ENCODE measurements at regions of chr4 and their contacts with region 1.

Region 1: DNA sequence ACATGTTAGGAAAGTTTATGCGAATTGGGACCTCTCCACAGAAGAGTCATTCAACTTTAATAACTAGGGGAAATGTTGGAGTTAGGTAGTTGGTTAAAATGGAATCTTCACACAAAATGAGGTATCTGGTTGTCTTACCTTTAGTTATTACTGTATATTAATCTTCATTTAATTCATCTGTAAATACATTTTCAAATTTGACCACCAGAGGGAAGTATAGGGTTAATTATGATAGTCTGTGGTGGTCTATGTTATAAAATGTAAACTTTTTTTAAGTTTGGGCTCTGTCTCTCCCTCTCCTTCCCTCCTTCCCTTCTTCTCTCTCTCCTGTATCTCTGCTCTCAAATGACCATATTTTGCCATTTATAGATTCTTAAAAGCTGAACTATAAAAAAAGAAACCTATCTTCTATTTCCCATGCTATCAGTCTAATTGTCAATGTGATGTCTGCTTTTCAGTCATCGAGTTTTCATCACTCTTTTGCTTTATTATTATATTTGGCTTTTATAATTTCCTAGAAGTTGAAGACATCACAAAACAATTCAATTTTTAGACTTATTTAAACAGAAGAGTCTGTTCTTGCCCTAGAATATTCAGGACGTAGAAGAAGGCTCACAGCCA is 49.8 kb downstream of the TMEM144 start:
- DNase-seq: peak; percentile 56
- H3K4me3 Mint-ChIP-seq: no peak overlapping the region
- H3K27ac Mint-ChIP-seq: peak overlapping the region; percentile 40
- H3K4me1 Mint-ChIP-seq: peaks cover 6% of the 10 kb centered on the region
- H3K27me3 Mint-ChIP-seq: no peaks in the 10 kb centered on the region
- CTCF ChIP-seq: peak; percentile 59

Region 2: DNA sequence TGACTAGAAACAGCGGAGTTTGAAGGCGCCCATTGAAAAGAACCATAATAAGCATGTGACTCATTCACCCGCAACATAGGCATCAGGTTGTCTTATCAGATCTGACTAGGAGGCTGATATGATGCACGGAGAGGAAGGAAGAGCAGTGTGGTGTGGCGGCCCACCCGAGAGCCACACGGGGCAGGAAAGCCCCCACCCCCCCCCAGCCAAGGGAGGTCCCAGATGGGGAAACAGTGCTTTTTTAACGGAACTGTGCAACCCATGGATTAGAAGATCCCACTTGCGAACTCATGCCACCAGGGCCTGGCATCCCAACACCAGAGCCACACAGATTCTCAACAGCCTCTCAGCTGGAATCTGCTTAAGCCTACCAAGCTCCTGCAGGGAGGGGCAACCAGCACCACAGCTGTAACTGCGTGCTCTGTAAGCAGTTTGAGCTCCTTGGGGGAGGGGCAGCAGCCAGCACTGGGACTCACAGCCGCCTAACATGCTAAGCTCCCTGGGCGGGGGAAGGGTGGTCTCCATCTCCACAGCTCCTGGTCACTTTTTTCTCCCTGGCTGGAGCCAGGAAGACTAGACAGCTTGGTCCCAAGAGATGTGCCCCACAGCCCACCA is 1754.6 kb before region 1 on chr4:
- CTCF ChIA-PET with region 1: no interaction called
- POLR2A ChIA-PET with region 1: no interaction called
- intact Hi-C with region 1: no loop called
- DNase-seq: no peak
- H3K4me3 Mint-ChIP-seq: no peak overlapping the region
- H3K27ac Mint-ChIP-seq: no peak overlapping the region
- H3K4me1 Mint-ChIP-seq: no peaks in the 10 kb centered on the region
- H3K27me3 Mint-ChIP-seq: no peaks in the 10 kb centered on the region
- CTCF ChIP-seq: no peak

Region 3: GRCh38 chr4:158033416-158034120 is 226.5 kb before region 1 on chr4:
- CTCF ChIA-PET with region 1: no interaction called
- POLR2A ChIA-PET with region 1: no interaction called
- intact Hi-C with region 1: no loop called
- DNase-seq: peak; percentile 21
- H3K4me3 Mint-ChIP-seq: no peak overlapping the region
- H3K27ac Mint-ChIP-seq: no peak overlapping the region
- H3K4me1 Mint-ChIP-seq: peaks cover 8% of the 10 kb centered on the region
- H3K27me3 Mint-ChIP-seq: no peaks in the 10 kb centered on the region
- CTCF ChIP-seq: no peak

Region 4: GRCh38 chr4:158314756-158315487 is 54.9 kb after region 1 on chr4:
- CTCF ChIA-PET with region 1: interaction called, 4 read pairs
- POLR2A ChIA-PET with region 1: no interaction called
- intact Hi-C with region 1: loop called (anchors 2 kb)
- DNase-seq: peak; percentile 90
- H3K4me3 Mint-ChIP-seq: peak overlapping the region; percentile 74
- H3K27ac Mint-ChIP-seq: peak overlapping the region; percentile 100
- H3K4me1 Mint-ChIP-seq: peaks cover 49% of the 10 kb centered on the region
- H3K27me3 Mint-ChIP-seq: no peaks in the 10 kb centered on the region
- CTCF ChIP-seq: no peak

Region 5: GRCh38 chr4:158395889-158396288 is 135.8 kb after region 1 on chr4:
- CTCF ChIA-PET with region 1: interaction called, 3 read pairs
- POLR2A ChIA-PET with region 1: interaction called, 3 read pairs
- intact Hi-C with region 1: loop called (anchors 10 kb)
- DNase-seq: no peak
- H3K4me3 Mint-ChIP-seq: no peak overlapping the region
- H3K27ac Mint-ChIP-seq: no peak overlapping the region
- H3K4me1 Mint-ChIP-seq: peaks cover 4% of the 10 kb centered on the region
- H3K27me3 Mint-ChIP-seq: no peaks in the 10 kb centered on the region
- CTCF ChIP-seq: no peak

Region 6: DNA sequence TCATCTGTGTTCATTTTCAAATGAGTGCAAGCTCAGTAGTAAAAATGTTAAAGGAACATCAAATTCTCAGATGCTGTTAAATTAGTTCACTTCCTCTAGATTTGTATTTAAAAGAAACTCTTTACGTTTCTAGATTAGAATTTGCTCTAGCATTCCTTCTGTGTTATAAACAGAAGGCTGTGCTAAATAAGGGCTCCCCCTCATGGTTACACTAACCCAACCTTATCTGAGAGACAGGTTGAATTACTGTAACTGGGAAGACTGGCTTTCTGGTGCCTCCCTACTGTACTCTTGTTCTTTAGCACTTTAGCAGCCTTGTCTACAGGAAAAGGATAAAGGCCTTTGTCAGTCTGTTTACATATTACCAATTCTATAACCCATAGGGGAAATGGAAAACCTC is 318.4 kb after region 1 on chr4:
- CTCF ChIA-PET with region 1: interaction called, 8 read pairs
- POLR2A ChIA-PET with region 1: no interaction called
- intact Hi-C with region 1: loop called (anchors 1 kb)
- DNase-seq: peak; percentile 55
- H3K4me3 Mint-ChIP-seq: no peak overlapping the region
- H3K27ac Mint-ChIP-seq: peak overlapping the region; percentile 63
- H3K4me1 Mint-ChIP-seq: peaks cover 9% of the 10 kb centered on the region
- H3K27me3 Mint-ChIP-seq: no peaks in the 10 kb centered on the region
- CTCF ChIP-seq: peak; percentile 48

Region 7: DNA sequence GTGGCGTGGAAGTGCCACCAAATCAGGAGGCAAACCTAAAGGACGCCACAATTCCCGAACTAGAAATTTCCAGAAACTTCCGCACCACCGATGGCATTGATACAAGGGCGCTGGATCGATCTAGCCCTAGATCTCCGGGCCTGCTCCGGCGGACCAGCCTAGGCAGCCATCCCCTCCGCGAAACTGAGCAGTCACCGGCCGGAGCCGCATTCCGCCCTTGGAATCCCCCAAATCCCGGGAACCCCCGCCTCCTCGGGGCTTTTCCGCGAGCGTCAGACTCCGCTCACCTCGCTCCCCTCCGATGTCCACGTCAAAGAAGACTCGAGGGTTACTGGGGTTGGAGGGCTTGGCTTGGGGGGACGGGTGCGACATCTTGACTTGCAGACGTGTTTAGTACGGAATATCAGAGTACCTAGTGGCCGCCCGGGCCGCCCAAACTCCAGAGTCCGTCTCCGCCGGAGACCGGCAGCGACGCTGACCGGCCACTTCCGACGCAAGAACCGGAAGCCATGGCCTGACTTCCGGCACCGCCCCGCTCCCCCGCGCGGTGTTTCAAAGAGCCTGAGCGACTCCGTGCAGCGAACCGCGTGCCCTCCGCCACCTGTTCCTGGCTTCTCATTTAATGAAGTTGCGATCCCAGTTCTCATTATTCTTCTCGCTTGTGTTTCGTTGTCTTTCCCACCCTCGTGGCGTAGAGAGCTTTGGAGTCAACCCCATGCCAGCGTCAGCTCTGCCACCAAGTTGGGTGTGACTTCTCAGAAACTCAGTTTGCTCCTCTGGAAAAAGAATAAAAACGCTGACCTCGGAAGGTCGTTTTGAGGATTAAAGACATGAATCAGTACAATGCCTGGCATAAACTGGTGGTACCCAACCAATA is 463.1 kb after region 1 on chr4 and contains the start of gene PPID:
- CTCF ChIA-PET with region 1: no interaction called
- POLR2A ChIA-PET with region 1: no interaction called
- intact Hi-C with region 1: loop called (anchors 1 kb)
- DNase-seq: peak; percentile 82
- H3K4me3 Mint-ChIP-seq: peak within 1 kb of the TSS; percentile 100
- H3K27ac Mint-ChIP-seq: peak within 1 kb of the TSS; percentile 97
- H3K4me1 Mint-ChIP-seq: peaks cover 7% of the 10 kb centered on the region
- H3K27me3 Mint-ChIP-seq: peaks cover 17% of the 10 kb centered on the region
- CTCF ChIP-seq: no peak
- total RNA-seq, gene PPID: 29.2 and 36.6 TPM in 2 replicates

Region 8: GRCh38 chr4:159206427-159206871 is 946.4 kb after region 1 on chr4:
- CTCF ChIA-PET with region 1: no interaction called
- POLR2A ChIA-PET with region 1: no interaction called
- intact Hi-C with region 1: loop called (anchors 2 kb)
- DNase-seq: no peak
- H3K4me3 Mint-ChIP-seq: no peak overlapping the region
- H3K27ac Mint-ChIP-seq: no peak overlapping the region
- H3K4me1 Mint-ChIP-seq: peaks cover 18% of the 10 kb centered on the region
- H3K27me3 Mint-ChIP-seq: no peaks in the 10 kb centered on the region
- CTCF ChIP-seq: no peak

Region 9: GRCh38 chr4:159446266-159446976 is 1186.4 kb after region 1 on chr4:
- CTCF ChIA-PET with region 1: no interaction called
- POLR2A ChIA-PET with region 1: no interaction called
- intact Hi-C with region 1: loop called (anchors 5 kb)
- DNase-seq: peak; percentile 75
- H3K4me3 Mint-ChIP-seq: no peak overlapping the region
- H3K27ac Mint-ChIP-seq: peak overlapping the region; percentile 23
- H3K4me1 Mint-ChIP-seq: peaks cover 7% of the 10 kb centered on the region
- H3K27me3 Mint-ChIP-seq: no peaks in the 10 kb centered on the region
- CTCF ChIP-seq: peak; percentile 88